ENCODE measurements at regions of chr13 and their contacts with region 1.

Region 1: GRCh38 chr13:48749699-48750473 is 96.2 kb downstream of the CYSLTR2 start:
- DNase-seq: peak in 4 of 5 donors; percentile 14 to 73 (median 21)
- H3K4me3 ChIP-seq: no peak overlapping the region
- H3K4me3 Mint-ChIP-seq: peak overlapping the region in 6 of 7 donors; percentile 60 to 87 (median 71)
- H3K27ac ChIP-seq: no peak overlapping the region
- H3K27ac Mint-ChIP-seq: peak overlapping the region in 5 of 8 donors; percentile 12 to 87 (median 74)
- H3K4me1 ChIP-seq: no peaks in the 10 kb centered on the region
- H3K4me1 Mint-ChIP-seq: peaks cover 9 to 20% (median 14%) of the 10 kb centered on the region in 3 donors
- H3K27me3 ChIP-seq: no peaks in the 10 kb centered on the region
- H3K27me3 Mint-ChIP-seq: peaks cover 0 to under 1% of the 10 kb centered on the region in 2 donors

Region 2: GRCh38 chr13:48562296-48563066 is 187.4 kb before region 1 on chr13:
- CTCF ChIA-PET with region 1: no interaction called
- POLR2A ChIA-PET with region 1: no interaction called
- DNase-seq: peak; percentile 38 to 85 (median 80)
- H3K4me3 ChIP-seq: peak overlapping the region; percentile 30
- H3K4me3 Mint-ChIP-seq: peak overlapping the region; percentile 8 to 79 (median 56)
- H3K27ac ChIP-seq: no peak overlapping the region
- H3K27ac Mint-ChIP-seq: peak overlapping the region in 6 of 8 donors; percentile 4 to 85 (median 42)
- H3K4me1 ChIP-seq: peaks cover 32% of the 10 kb centered on the region
- H3K4me1 Mint-ChIP-seq: peaks cover 46 to 79% (median 61%) of the 10 kb centered on the region in 3 donors
- H3K27me3 ChIP-seq: no peaks in the 10 kb centered on the region
- H3K27me3 Mint-ChIP-seq: peaks cover 0 to 3% of the 10 kb centered on the region in 2 donors

Region 3: GRCh38 chr13:48727241-48728011 is 22.5 kb before region 1 on chr13:
- CTCF ChIA-PET with region 1: no interaction called
- POLR2A ChIA-PET with region 1: no interaction called
- DNase-seq: no peak
- H3K4me3 ChIP-seq: no peak overlapping the region
- H3K4me3 Mint-ChIP-seq: no peak overlapping the region
- H3K27ac ChIP-seq: no peak overlapping the region
- H3K27ac Mint-ChIP-seq: no peak overlapping the region
- H3K4me1 ChIP-seq: no peaks in the 10 kb centered on the region
- H3K4me1 Mint-ChIP-seq: peaks cover 0 to 17% (median 11%) of the 10 kb centered on the region in 3 donors
- H3K27me3 ChIP-seq: no peaks in the 10 kb centered on the region
- H3K27me3 Mint-ChIP-seq: peaks cover 0 to 2% of the 10 kb centered on the region in 2 donors

Region 4: DNA sequence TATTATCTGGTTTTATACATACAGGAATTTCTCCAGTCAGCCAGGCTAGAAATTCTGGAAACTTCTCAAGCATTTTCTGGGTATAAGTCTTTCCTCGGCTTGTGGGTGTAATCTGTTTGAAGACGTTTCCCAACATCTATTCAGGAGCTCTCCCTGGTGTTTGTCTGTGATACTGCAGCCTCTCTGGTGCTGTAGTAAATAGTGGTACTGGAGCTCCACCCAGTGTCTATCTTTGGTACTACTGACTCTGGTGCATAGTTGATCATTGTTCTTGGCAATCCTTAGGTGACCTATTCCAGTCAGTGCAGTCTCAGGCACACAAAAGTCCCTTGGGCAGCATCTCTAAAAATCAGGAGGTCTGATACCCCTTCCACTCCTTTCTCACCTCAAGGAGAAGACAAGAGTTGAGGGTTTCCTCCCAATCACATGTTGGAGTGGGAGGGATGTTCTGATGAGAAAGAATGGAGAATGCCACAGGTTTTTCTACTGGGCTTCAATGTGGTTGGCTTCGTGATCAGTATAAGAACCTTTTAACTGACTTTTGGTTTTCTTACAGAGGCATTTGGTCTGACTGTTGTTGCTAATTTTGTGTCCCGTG is 19.3 kb after region 1 on chr13:
- CTCF ChIA-PET with region 1: interaction called, 13 read pairs
- POLR2A ChIA-PET with region 1: no interaction called
- DNase-seq: peak; percentile 61 to 83 (median 75)
- H3K4me3 ChIP-seq: no peak overlapping the region
- H3K4me3 Mint-ChIP-seq: no peak overlapping the region
- H3K27ac ChIP-seq: no peak overlapping the region
- H3K27ac Mint-ChIP-seq: no peak overlapping the region
- H3K4me1 ChIP-seq: no peaks in the 10 kb centered on the region
- H3K4me1 Mint-ChIP-seq: peaks cover 3 to 21% (median 5%) of the 10 kb centered on the region in 3 donors
- H3K27me3 ChIP-seq: no peaks in the 10 kb centered on the region
- H3K27me3 Mint-ChIP-seq: peaks cover 8 to 28% of the 10 kb centered on the region in 2 donors

Measured in CD8-positive, alpha-beta memory T cell (primary cell).